ENCODE measurements at regions of chr13 and their contacts with region 1.

Region 1: GRCh38 chr13:114132419-114133121 is at the start of gene RASA3:
- DNase-seq: peak; percentile 71
- ATAC-seq: peak; percentile 56
- H3K4me3 Mint-ChIP-seq: peak within 1 kb of the TSS; percentile 99
- H3K27ac Mint-ChIP-seq: peak within 1 kb of the TSS; percentile 91
- H3K4me1 Mint-ChIP-seq: peaks cover 30% of the 10 kb centered on the region
- H3K27me3 Mint-ChIP-seq: no peaks in the 10 kb centered on the region
- CTCF ChIP-seq: no peak
- total RNA-seq, gene RASA3: 28.9 to 32.3 TPM

Region 2: DNA sequence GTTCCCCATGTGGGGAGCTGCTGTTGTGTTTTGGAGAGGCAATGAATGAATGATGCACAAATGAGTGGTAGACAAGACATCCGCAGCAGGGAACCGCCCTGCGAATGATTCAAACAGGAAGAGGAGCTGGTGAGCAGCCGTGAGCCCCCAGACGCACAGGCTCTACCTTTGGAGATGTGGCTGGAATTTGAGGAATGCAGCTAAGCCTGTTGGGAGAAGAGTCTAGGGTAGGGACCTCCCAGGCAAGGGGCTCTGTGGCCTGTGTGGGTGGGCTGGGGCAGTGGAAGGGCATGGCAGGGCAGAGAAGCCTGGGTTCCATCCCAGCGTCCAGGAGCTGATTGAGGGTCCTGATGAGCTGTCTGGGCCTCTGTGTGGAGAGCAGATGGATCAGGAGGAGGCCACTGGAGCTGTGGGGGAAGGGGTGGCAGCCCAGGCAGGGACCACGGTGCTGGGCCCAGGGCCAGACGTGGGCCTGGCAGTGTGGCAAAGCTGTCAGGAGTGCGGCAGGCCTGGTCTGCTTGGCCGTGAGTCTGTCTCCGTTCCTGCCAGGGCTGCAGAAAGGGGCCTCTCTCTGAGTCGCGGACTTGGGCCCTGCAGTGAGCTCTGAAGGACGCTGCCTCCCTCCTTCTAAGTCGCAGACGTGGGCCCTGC is 600.3 kb before region 1 on chr13:
- CTCF ChIA-PET with region 1: no interaction called
- POLR2A ChIA-PET with region 1: no interaction called
- intact Hi-C with region 1: no loop called
- DNase-seq: no peak
- ATAC-seq: no peak
- H3K4me3 Mint-ChIP-seq: no peak overlapping the region
- H3K27ac Mint-ChIP-seq: no peak overlapping the region
- H3K4me1 Mint-ChIP-seq: no peaks in the 10 kb centered on the region
- H3K27me3 Mint-ChIP-seq: no peaks in the 10 kb centered on the region
- CTCF ChIP-seq: no peak

Region 3: DNA sequence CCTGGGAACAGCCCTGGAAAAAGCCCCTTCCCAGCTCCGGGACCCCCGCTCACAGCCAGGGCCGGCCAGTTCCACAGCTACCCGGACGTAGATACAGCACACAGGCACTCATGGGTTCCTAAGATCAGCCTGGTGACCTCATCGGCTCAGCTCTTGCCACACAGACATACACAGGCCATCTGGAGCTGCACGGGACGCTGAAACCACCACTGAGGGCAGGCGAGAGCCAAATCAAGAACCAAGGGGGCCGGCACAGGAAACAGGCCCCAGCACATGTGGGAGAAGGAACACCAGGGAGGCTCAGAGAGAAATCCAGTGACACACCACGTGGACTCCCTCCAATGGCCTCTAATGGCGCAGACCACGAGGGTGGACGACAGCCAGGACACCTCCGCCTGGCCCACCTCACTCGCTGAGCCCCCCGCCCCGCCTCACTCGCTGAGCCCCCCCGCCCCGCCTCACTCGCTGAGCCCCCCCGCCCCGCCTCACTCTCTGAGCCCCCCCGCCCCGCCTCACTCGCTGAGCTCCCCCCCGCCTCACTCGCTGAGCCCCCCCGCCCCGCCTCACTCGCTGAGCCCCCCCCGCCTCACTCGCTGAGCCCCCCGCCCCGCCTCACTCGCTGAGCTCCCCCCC is 89.0 kb before region 1 on chr13:
- CTCF ChIA-PET with region 1: no interaction called
- POLR2A ChIA-PET with region 1: no interaction called
- intact Hi-C with region 1: no loop called
- DNase-seq: peak; percentile 54
- ATAC-seq: peak; percentile 84
- H3K4me3 Mint-ChIP-seq: no peak overlapping the region
- H3K27ac Mint-ChIP-seq: peak overlapping the region; percentile 80
- H3K4me1 Mint-ChIP-seq: peaks cover 44% of the 10 kb centered on the region
- H3K27me3 Mint-ChIP-seq: no peaks in the 10 kb centered on the region
- CTCF ChIP-seq: no peak

Region 4: DNA sequence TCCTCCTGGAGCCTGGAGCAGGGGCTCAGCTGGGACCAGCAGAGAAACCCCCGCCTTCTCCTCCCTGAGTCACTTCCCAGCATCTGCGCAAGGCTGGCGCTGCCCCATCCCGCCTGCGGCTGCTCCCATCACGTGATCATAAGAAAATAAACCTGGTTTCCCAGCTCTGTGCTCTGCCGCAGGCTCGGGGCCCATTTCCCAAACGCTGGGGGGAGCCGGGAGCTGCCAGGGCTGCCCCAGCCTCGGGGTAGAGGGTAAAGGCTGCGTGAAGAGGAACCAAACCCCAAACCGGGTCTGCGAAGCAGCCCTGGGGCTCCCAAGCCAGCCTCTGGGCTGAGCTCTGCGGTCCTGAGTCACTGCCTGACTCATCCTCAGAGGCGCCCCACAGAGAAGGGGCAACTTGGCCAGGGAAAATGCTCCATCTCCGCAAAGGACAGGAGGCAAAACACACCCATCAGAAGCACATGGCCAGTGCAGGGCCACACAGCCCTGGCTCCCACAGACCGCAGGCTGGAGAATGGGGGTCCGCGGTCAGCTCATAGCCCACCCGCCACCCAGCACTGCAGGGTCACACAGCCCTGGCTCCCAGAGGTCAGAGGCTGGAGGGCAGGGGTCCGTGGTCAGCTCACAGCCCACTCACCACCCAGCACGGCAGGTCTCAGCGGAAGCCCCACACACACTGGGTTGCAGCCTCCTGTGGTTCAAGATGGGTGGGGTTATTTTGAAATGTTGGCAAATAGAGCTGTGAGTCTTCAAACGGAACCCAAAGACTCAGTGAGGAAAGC is 67.2 kb before region 1 on chr13:
- CTCF ChIA-PET with region 1: interaction called, 7 read pairs
- POLR2A ChIA-PET with region 1: interaction called, 32 read pairs
- intact Hi-C with region 1: loop called (anchors 1 kb)
- DNase-seq: peak; percentile 90
- ATAC-seq: peak; percentile 75
- H3K4me3 Mint-ChIP-seq: peak overlapping the region; percentile 66
- H3K27ac Mint-ChIP-seq: peak overlapping the region; percentile 94
- H3K4me1 Mint-ChIP-seq: peaks cover 66% of the 10 kb centered on the region
- H3K27me3 Mint-ChIP-seq: no peaks in the 10 kb centered on the region
- CTCF ChIP-seq: no peak

Region 5: GRCh38 chr13:114110091-114110829 is 22.3 kb before region 1 on chr13:
- CTCF ChIA-PET with region 1: interaction called, 15 read pairs
- POLR2A ChIA-PET with region 1: interaction called, 99 read pairs
- intact Hi-C with region 1: no loop called
- DNase-seq: peak; percentile 86
- ATAC-seq: peak; percentile 86
- H3K4me3 Mint-ChIP-seq: peak overlapping the region; percentile 71
- H3K27ac Mint-ChIP-seq: peak overlapping the region; percentile 89
- H3K4me1 Mint-ChIP-seq: peaks cover 79% of the 10 kb centered on the region
- H3K27me3 Mint-ChIP-seq: no peaks in the 10 kb centered on the region
- CTCF ChIP-seq: peak; percentile 23

Region 6: DNA sequence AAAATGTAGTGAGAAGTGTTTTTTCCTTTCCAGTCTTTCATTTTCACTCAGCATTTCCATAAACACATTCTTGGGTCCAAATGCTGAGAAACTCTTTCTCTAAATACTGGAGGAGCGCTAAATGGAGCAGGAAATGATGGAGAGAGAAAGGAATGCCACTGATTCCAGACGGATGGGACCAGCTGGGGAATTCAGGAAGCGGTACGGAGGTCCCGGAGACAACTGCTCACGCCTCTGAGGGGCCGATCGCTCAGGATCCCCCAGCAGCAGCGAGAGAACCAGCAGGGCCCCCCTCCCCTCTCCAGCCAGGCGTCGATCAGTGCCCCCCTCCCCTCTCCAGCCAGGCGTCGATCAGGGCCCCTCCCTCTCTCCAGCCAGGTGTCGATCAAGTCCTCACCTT is 13.4 kb before region 1 on chr13:
- CTCF ChIA-PET with region 1: no interaction called
- POLR2A ChIA-PET with region 1: interaction called, 99 read pairs
- intact Hi-C with region 1: no loop called
- DNase-seq: peak; percentile 11
- ATAC-seq: no peak
- H3K4me3 Mint-ChIP-seq: peak overlapping the region; percentile 38
- H3K27ac Mint-ChIP-seq: peak overlapping the region; percentile 81
- H3K4me1 Mint-ChIP-seq: peaks cover 74% of the 10 kb centered on the region
- H3K27me3 Mint-ChIP-seq: no peaks in the 10 kb centered on the region
- CTCF ChIP-seq: no peak

Region 7: GRCh38 chr13:114143806-114144605 is 11.4 kb after region 1 on chr13:
- CTCF ChIA-PET with region 1: interaction called, 4 read pairs
- POLR2A ChIA-PET with region 1: interaction called, 50 read pairs
- intact Hi-C with region 1: loop called (anchors 1 kb)
- DNase-seq: peak; percentile 76
- ATAC-seq: peak; percentile 50
- H3K4me3 Mint-ChIP-seq: no peak overlapping the region
- H3K27ac Mint-ChIP-seq: peak overlapping the region; percentile 68
- H3K4me1 Mint-ChIP-seq: peaks cover 41% of the 10 kb centered on the region
- H3K27me3 Mint-ChIP-seq: no peaks in the 10 kb centered on the region
- CTCF ChIP-seq: peak; percentile 63